Activated CD8-positive, alpha-beta T cell treated with anti-CD3 and anti-CD28 coated beads for 36 hours (primary cell): ENCODE measurements at regions of chr1 and their contacts with region 1.

Region 1: GRCh38 chr1:159924981-159925712 is at the start of gene TAGLN2:
- DNase-seq: peak; percentile 94
- ATAC-seq: peak; percentile 74
- H3K4me3 Mint-ChIP-seq: peak within 1 kb of the TSS; percentile 92
- H3K27ac Mint-ChIP-seq: peak within 1 kb of the TSS; percentile 98
- H3K4me1 Mint-ChIP-seq: peaks cover 50% of the 10 kb centered on the region
- H3K27me3 Mint-ChIP-seq: no peaks in the 10 kb centered on the region
- CTCF ChIP-seq: no peak
- total RNA-seq, gene TAGLN2: 475 to 482 TPM

Region 2: GRCh38 chr1:159826441-159827101 is 98.6 kb before region 1 on chr1 and contains the start of gene SLAMF8:
- CTCF ChIA-PET with region 1: no interaction called
- POLR2A ChIA-PET with region 1: interaction called, 10 read pairs
- intact Hi-C with region 1: no loop called
- DNase-seq: peak; percentile 90
- ATAC-seq: peak; percentile 75
- H3K4me3 Mint-ChIP-seq: peak within 1 kb of the TSS; percentile 51
- H3K27ac Mint-ChIP-seq: peak within 1 kb of the TSS; percentile 88
- H3K4me1 Mint-ChIP-seq: peaks cover 53% of the 10 kb centered on the region
- H3K27me3 Mint-ChIP-seq: no peaks in the 10 kb centered on the region
- CTCF ChIP-seq: no peak
- total RNA-seq, gene SLAMF8: 0.54 TPM

Region 3: DNA sequence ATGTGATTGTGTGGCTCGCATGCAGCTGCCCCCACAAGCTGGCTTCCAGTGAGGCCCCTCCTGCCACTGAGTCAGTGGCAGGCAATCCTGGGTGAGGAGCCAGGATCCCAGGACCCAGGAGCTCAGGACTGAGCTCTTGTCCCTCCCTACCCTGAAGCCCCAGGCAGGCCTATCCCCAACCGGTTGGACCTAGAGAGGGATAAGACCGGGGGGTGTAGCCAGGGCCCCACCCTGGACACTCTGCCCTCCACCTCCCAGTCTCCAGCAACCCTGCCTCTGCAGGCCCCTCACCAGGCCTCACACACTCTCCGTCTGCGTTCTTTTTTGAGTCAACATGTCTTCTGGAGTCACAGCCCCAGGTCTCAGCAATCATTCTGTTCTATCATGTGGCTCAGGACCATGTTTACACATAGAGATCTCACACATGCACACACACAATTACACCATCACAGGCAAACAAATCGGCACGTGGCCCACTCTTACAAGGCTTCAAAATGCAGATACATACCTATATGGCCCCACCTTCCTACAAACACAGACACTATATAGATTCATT is 65.3 kb before region 1 on chr1:
- CTCF ChIA-PET with region 1: no interaction called
- POLR2A ChIA-PET with region 1: no interaction called
- intact Hi-C with region 1: no loop called
- DNase-seq: no peak
- ATAC-seq: no peak
- H3K4me3 Mint-ChIP-seq: no peak overlapping the region
- H3K27ac Mint-ChIP-seq: no peak overlapping the region
- H3K4me1 Mint-ChIP-seq: peaks cover 7% of the 10 kb centered on the region
- H3K27me3 Mint-ChIP-seq: no peaks in the 10 kb centered on the region
- CTCF ChIP-seq: no peak

Region 4: DNA sequence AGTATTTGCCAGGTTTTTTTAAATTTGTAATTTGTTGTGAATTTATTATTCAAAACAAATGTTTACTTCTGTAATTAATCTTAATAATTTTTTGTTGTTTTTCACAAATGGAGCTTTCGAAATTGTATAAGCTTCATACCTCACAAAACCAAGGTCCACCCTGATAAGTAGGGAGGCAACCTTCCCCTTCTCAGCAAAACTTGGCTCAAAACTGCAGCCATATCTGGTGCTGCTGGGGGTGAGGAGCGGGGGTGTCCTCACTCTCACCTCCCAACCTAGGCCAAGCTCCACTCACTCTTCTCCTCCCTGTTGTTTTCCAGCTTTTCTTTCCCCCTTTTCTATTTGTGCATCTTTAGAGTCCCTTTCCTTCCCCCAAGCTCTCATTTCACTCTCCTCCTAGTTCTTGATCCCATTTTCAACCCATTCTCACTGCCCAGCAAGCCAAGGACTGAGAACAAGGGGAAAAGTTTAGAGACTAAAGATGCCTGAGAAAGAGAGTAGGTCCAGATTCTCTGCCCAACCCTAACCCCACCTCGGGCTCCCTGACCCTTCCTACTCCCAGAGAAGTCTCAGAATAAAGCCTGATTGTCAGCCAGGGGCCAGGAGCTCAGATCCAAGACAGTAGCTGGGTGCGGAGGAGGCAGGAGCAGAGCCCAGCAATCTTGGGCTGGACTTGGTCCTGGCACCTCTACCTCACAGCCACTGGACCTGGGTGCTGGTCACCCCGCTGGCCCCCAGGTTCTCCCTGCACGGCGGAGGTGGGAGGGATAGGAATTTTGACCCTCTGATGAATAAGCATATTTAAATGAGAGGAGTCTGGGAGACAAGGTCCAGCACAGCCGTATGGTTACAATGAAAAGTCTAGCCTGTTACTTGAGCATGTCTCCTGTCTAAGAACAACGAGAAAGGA is 16.9 kb before region 1 on chr1:
- CTCF ChIA-PET with region 1: no interaction called
- POLR2A ChIA-PET with region 1: interaction called, 56 read pairs
- intact Hi-C with region 1: no loop called
- DNase-seq: no peak
- ATAC-seq: no peak
- H3K4me3 Mint-ChIP-seq: no peak overlapping the region
- H3K27ac Mint-ChIP-seq: peak overlapping the region; percentile 5
- H3K4me1 Mint-ChIP-seq: peaks cover 34% of the 10 kb centered on the region
- H3K27me3 Mint-ChIP-seq: no peaks in the 10 kb centered on the region
- CTCF ChIP-seq: no peak

Region 5: DNA sequence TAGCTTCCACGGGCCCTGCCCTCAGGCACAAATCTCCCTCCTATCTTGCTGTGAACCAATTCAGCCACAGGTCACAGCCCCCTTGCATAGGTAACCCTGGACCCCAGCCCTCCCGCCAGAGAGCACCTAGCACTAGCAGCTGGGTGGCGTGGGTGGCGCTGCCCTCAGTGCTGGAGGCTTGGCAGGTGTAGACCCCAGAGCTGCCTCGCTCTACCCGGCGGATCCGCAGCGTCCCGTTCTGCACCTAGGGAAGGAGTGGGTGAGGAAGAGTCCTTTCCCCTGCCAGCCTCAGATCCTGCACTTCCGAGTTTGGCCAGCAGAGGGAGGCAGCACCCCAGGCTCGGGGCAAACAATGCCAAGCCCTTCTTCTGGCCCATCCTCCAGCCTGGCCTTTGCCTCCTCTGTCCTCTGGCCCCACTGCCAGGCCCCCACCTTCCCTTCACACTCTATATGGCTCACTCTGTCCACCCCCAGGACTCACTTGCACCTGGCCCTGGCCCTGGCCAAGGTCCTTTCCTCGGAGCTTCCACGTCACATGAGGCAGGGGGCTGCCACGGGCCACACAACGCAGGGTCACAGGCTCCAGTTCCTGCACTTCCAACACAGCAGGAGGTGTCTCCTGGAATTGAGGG is 11.2 kb after region 1 on chr1:
- CTCF ChIA-PET with region 1: interaction called, 8 read pairs
- POLR2A ChIA-PET with region 1: interaction called, 11 read pairs
- intact Hi-C with region 1: no loop called
- DNase-seq: peak; percentile 85
- ATAC-seq: peak; percentile 96
- H3K4me3 Mint-ChIP-seq: no peak overlapping the region
- H3K27ac Mint-ChIP-seq: no peak overlapping the region
- H3K4me1 Mint-ChIP-seq: peaks cover 3% of the 10 kb centered on the region
- H3K27me3 Mint-ChIP-seq: peaks cover 2% of the 10 kb centered on the region
- CTCF ChIP-seq: peak; percentile 97

Region 6: GRCh38 chr1:159970932-159971342 is 45.8 kb after region 1 on chr1:
- CTCF ChIA-PET with region 1: no interaction called
- POLR2A ChIA-PET with region 1: no interaction called
- intact Hi-C with region 1: no loop called
- DNase-seq: no peak
- ATAC-seq: no peak
- H3K4me3 Mint-ChIP-seq: no peak overlapping the region
- H3K27ac Mint-ChIP-seq: no peak overlapping the region
- H3K4me1 Mint-ChIP-seq: no peaks in the 10 kb centered on the region
- H3K27me3 Mint-ChIP-seq: peaks cover 14% of the 10 kb centered on the region
- CTCF ChIP-seq: no peak

Region 7: GRCh38 chr1:160031365-160032164 is 106.4 kb after region 1 on chr1 and contains the start of gene PIGM:
- CTCF ChIA-PET with region 1: interaction called, 9 read pairs
- POLR2A ChIA-PET with region 1: interaction called, 20 read pairs
- intact Hi-C with region 1: no loop called
- DNase-seq: peak; percentile 98
- ATAC-seq: peak; percentile 99
- H3K4me3 Mint-ChIP-seq: peak within 1 kb of the TSS; percentile 88
- H3K27ac Mint-ChIP-seq: peak within 1 kb of the TSS; percentile 81
- H3K4me1 Mint-ChIP-seq: peaks cover 32% of the 10 kb centered on the region
- H3K27me3 Mint-ChIP-seq: no peaks in the 10 kb centered on the region
- CTCF ChIP-seq: no peak
- total RNA-seq, gene PIGM: 3.9 to 4.0 TPM